ENCODE measurements at regions of chr7 and their contacts with region 1.

Region 1: DNA sequence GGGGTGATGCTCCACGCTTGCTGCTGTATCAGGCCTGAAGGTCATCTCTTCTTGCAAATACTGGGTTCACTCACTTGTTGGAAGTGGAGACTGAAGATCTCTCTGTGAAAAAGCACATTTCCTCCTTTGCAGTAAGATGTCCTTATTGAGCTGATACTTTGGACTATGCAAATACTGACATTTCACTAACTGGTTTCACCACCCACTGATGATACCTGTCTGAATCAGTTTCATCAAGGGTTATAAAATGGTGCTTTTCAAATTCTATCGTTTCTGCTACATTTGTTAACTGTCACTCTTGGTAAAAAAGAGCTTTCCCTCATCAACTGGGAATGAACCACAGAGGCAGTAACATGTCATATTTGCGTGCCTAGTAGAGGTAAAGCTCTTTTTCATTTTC is 35.5 kb downstream of the RAB19 start:
- DNase-seq: no peak
- ATAC-seq: no peak
- H3K4me3 ChIP-seq: no peak overlapping the region
- H3K27ac ChIP-seq: no peak overlapping the region
- H3K4me1 ChIP-seq: peaks cover 2 to 12% of the 10 kb centered on the region in 2 experiments; a peak in 4 of 5 replicates
- H3K27me3 ChIP-seq: peaks cover 5 to 9% of the 10 kb centered on the region in 2 experiments
- CTCF ChIP-seq: no peak
- EP300 ChIP-seq: no peak
- POLR2A ChIP-seq: no peak
- RAD21 ChIP-seq: no peak

Region 2: GRCh38 chr7:140403878-140404564 is 35.3 kb before region 1 on chr7 and contains the start of gene RAB19:
- CTCF ChIA-PET with region 1: no interaction called
- POLR2A ChIA-PET with region 1: no interaction called
- in situ Hi-C with region 1: no loop called
- intact Hi-C with region 1: loop called (anchors 5 kb)
- DNase-seq: peak in 1 of 4 experiments; percentile 45
- ATAC-seq: peak; percentile 65
- H3K4me3 ChIP-seq: no peak within 1 kb of the TSS
- H3K27ac ChIP-seq: 0 out of 3 replicates have a peak within 1 kb of the TSS, but pooled peaks have one; percentile 1
- H3K4me1 ChIP-seq: peaks cover 12 to 16% of the 10 kb centered on the region in 2 experiments; a peak in 4 of 5 replicates
- H3K27me3 ChIP-seq: no peaks in the 10 kb centered on the region; a peak in 1 of 5 replicates
- CTCF ChIP-seq: no peak
- EP300 ChIP-seq: no peak
- POLR2A ChIP-seq: no peak
- RAD21 ChIP-seq: no peak
- polyA plus RNA-seq, gene RAB19: not detected

Region 3: GRCh38 chr7:140456551-140457051 is 17.2 kb after region 1 on chr7:
- CTCF ChIA-PET with region 1: no interaction called
- POLR2A ChIA-PET with region 1: interaction called, 19 read pairs
- in situ Hi-C with region 1: no loop called
- intact Hi-C with region 1: no loop called
- DNase-seq: no peak
- ATAC-seq: no peak
- H3K4me3 ChIP-seq: no peak overlapping the region
- H3K27ac ChIP-seq: no peak overlapping the region
- H3K4me1 ChIP-seq: no peaks in the 10 kb centered on the region
- H3K27me3 ChIP-seq: no peaks in the 10 kb centered on the region
- CTCF ChIP-seq: no peak
- EP300 ChIP-seq: no peak
- POLR2A ChIP-seq: no peak
- RAD21 ChIP-seq: no peak

Region 4: GRCh38 chr7:140564643-140565042 is 125.3 kb after region 1 on chr7:
- CTCF ChIA-PET with region 1: no interaction called
- POLR2A ChIA-PET with region 1: no interaction called
- in situ Hi-C with region 1: no loop called
- intact Hi-C with region 1: no loop called
- DNase-seq: no peak
- ATAC-seq: no peak
- H3K4me3 ChIP-seq: no peak overlapping the region
- H3K27ac ChIP-seq: no peak overlapping the region
- H3K4me1 ChIP-seq: no peaks in the 10 kb centered on the region
- H3K27me3 ChIP-seq: peaks cover 54 to 87% of the 10 kb centered on the region in 2 experiments
- CTCF ChIP-seq: no peak
- EP300 ChIP-seq: no peak
- POLR2A ChIP-seq: no peak
- RAD21 ChIP-seq: no peak

Region 5: DNA sequence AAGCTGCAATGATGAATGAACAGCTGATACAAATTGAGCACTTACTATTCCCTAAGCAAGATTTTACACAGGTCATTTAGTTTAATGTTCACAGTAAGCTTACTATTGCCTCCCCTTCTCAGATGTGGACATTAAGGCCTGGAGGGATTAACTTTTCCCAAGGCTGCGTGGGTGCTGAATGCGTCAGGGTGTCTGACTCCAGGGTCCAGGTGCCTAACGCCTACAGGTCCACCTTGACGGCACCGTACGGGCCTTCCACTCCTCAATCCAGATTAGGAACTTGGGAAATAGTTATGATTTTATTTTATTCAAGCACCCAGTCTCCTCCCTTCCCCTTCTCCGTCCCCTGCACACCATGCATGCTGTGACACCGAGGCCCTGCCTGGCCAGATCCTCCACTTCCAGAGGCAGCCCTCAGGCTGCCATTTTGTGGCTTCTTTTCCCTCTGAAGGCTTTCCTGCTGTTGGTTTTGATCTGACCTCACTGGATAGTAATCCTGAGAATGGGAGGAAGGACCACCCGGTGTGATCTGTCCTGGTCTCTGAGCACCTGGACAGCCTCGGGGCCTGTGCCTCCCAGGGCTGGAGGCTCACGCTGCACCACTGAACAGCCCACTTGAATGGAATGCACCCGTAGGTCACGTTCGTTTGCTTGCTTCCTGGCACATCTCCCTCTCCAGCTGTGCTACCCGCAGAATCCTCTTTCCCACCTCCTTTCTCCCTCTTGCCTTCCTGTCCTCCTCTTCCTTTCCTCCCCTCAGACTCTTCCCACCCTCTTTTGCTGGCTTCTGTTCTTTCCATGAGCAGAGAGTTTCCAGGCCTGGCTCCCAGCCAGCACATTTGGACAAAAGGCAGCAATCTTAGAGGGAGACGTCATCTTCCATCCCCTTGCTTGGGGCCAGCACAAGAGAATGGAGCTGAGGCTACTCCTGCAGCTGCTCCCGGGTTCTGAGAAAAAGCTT is 186.8 kb after region 1 on chr7:
- CTCF ChIA-PET with region 1: no interaction called
- POLR2A ChIA-PET with region 1: no interaction called
- in situ Hi-C with region 1: no loop called
- intact Hi-C with region 1: no loop called
- DNase-seq: no peak
- ATAC-seq: peak; percentile 14; the same call in 2 of the 3 replicates
- H3K4me3 ChIP-seq: no peak overlapping the region
- H3K27ac ChIP-seq: no peak overlapping the region
- H3K4me1 ChIP-seq: no peaks in the 10 kb centered on the region
- H3K27me3 ChIP-seq: peaks cover 57 to 85% of the 10 kb centered on the region in 2 experiments
- CTCF ChIP-seq: no peak
- EP300 ChIP-seq: no peak
- POLR2A ChIP-seq: no peak
- RAD21 ChIP-seq: no peak